ENCODE measurements at regions of chr5 and their contacts with region 1.

Region 1: GRCh38 chr5:142548739-142549275 is 137.1 kb downstream of the FGF1 start:
- DNase-seq: peak in 4 of 5 donors; percentile 26 to 48 (median 35)
- H3K4me3 ChIP-seq: no peak overlapping the region
- H3K27ac ChIP-seq: no peak overlapping the region
- H3K4me1 ChIP-seq: no peaks in the 10 kb centered on the region
- H3K27me3 ChIP-seq: no peaks in the 10 kb centered on the region
- CTCF ChIP-seq: peak in 2 of 3 donors; percentile 35 to 46
- EP300 ChIP-seq: no peak
- POLR2A ChIP-seq: no peak

Region 2: DNA sequence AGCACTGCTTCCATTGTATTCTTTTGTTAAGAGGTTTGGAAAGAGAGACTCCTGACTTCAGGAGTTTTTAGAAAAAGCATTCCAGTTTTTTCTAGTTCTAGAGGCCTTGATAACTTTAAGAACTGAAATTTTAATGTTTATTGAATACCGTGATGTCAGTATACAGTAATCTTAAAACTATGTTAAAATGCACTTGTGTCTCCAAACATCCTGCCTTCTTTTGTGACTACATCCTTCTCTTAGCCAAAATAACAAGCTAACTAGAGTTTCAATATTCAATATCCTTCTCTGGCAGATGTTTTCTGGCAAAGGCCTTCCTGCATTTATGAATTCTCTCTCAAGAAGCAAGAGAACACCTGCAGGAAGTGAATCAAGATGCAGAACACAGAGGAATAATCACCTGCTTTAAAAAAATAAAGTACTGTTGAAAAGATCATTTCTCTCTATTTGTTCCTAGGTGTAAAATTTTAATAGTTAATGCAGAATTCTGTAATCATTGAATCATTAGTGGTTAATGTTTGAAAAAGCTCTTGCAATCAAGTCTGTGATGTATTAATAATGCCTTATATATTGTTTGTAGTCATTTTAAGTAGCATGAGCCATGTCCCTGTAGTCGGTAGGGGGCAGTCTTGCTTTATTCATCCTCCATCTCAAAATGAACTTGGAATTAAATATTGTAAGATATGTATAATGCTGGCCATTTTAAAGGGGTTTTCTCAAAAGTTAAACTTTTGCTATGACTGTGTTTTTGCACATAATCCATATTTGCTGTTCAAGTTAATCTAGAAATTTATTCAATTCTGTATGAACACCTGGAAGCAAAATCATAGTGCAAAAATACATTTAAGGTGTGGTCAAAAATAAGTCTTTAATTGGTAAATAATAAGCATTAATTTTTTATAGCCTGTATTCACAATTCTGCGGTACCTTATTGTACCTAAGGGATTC is 397.1 kb before region 1 on chr5:
- intact Hi-C with region 1: loop called in 2 of 4 experiments (anchors 5 to 10 kb)
- DNase-seq: peak in 1 of 5 donors; percentile 50
- H3K4me3 ChIP-seq: no peak overlapping the region
- H3K27ac ChIP-seq: no peak overlapping the region
- H3K4me1 ChIP-seq: no peaks in the 10 kb centered on the region
- H3K27me3 ChIP-seq: no peaks in the 10 kb centered on the region
- CTCF ChIP-seq: peak; percentile 18 to 68 (median 67)
- EP300 ChIP-seq: no peak
- POLR2A ChIP-seq: no peak

Region 3: GRCh38 chr5:142568283-142568995 is 19.6 kb after region 1 on chr5:
- intact Hi-C with region 1: no loop called
- DNase-seq: peak; percentile 18 to 51 (median 27)
- H3K4me3 ChIP-seq: no peak overlapping the region
- H3K27ac ChIP-seq: no peak overlapping the region
- H3K4me1 ChIP-seq: peaks cover 3% of the 10 kb centered on the region
- H3K27me3 ChIP-seq: no peaks in the 10 kb centered on the region
- CTCF ChIP-seq: no peak
- EP300 ChIP-seq: no peak
- POLR2A ChIP-seq: no peak

Region 4: DNA sequence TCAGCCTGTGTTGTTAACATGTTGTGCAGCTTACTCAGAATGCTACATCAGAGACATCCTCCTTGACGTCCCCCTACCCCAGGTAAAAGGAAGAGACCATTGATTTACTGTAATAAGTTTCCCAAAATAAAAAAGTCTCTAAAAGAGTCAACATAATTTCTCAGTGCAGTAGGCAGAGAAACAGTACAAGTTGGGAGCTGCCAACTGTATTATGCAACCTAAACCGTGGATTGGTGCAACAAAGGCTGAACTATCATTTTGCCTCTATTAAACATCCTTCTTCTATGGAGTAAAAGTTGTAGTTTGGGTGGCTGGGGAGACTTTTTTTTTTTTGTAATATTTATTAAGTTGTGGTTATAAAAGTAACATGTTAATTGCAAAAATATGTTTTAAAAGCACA is 646.7 kb after region 1 on chr5:
- intact Hi-C with region 1: no loop called
- DNase-seq: no peak
- H3K4me3 ChIP-seq: no peak overlapping the region
- H3K27ac ChIP-seq: no peak overlapping the region
- H3K4me1 ChIP-seq: no peaks in the 10 kb centered on the region
- H3K27me3 ChIP-seq: no peaks in the 10 kb centered on the region
- CTCF ChIP-seq: no peak
- EP300 ChIP-seq: no peak
- POLR2A ChIP-seq: no peak

Region 5: DNA sequence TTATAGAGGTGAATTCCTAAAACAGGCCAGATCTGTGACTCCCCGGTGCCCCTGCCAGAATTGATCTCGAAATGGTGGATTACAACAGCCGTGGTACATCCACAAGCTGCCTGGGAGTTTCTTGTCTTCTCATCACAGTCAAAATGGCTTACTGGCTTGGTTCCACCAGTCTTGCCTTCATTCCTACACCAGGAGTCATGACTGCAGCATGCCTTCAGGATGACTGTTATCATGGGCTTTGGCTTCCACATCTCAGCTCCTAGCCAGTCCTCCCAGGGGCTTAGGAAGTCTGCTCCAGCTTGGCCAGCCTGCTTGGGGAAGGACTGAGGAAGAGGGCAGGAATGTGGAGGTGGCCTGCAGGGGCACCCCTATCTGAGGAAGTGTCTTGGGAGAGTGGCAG is 987.6 kb after region 1 on chr5:
- intact Hi-C with region 1: no loop called
- DNase-seq: no peak
- H3K4me3 ChIP-seq: no peak overlapping the region
- H3K27ac ChIP-seq: no peak overlapping the region
- H3K4me1 ChIP-seq: no peaks in the 10 kb centered on the region
- H3K27me3 ChIP-seq: no peaks in the 10 kb centered on the region
- CTCF ChIP-seq: no peak
- EP300 ChIP-seq: no peak
- POLR2A ChIP-seq: no peak

Measured in ovary (tissue), 10 donors.